ENCODE measurements at regions of chr1 and their contacts with region 1.

Region 1: DNA sequence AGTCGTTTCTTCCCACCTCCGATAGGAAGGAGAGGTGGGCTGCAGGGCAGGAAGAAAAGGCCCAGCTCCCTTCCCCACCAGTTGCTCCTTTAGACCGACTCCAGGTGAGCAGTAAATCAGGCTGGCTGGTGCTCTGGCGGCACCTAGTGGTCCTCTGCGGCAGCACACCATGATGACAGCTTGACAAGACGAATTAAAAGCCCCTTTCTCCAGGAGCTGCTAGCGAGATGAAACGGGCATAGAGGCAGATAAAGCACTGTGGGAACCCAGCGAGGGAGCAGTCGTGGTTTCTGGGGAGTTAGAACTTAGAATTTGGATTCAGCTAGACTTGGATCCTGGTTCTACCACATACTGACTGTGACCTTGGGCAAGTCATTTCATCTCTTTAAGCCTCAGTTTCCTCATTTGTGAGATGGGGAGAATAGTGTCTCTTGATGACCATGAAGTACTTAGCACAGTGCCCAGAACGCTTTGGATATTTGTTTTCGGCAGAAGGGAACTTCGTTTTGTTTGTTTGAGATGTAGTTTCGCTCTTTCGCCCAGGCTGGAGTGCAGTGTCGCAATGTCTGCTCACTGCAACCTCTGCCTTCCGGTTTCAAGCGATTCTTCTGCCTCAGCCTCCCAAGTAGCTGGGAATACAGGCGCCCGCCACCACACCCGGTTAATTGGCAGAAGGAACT is 21.8 kb upstream of the COL9A2 start:
- DNase-seq: peak; percentile 87
- ATAC-seq: peak; percentile 93
- H3K4me3 Mint-ChIP-seq: peak overlapping the region; percentile 36
- H3K27ac Mint-ChIP-seq: peak overlapping the region; percentile 64
- H3K4me1 Mint-ChIP-seq: peaks cover 40% of the 10 kb centered on the region
- H3K27me3 Mint-ChIP-seq: no peaks in the 10 kb centered on the region
- CTCF ChIP-seq: peak; percentile 96

Region 2: GRCh38 chr1:39919545-39919944 is 419.3 kb before region 1 on chr1:
- CTCF ChIA-PET with region 1: interaction called, 6 read pairs
- POLR2A ChIA-PET with region 1: no interaction called
- intact Hi-C with region 1: loop called (anchors 2 kb)
- DNase-seq: peak; percentile 22
- ATAC-seq: peak; percentile 99
- H3K4me3 Mint-ChIP-seq: no peak overlapping the region
- H3K27ac Mint-ChIP-seq: no peak overlapping the region
- H3K4me1 Mint-ChIP-seq: peaks cover 2% of the 10 kb centered on the region
- H3K27me3 Mint-ChIP-seq: no peaks in the 10 kb centered on the region
- CTCF ChIP-seq: no peak

Region 3: DNA sequence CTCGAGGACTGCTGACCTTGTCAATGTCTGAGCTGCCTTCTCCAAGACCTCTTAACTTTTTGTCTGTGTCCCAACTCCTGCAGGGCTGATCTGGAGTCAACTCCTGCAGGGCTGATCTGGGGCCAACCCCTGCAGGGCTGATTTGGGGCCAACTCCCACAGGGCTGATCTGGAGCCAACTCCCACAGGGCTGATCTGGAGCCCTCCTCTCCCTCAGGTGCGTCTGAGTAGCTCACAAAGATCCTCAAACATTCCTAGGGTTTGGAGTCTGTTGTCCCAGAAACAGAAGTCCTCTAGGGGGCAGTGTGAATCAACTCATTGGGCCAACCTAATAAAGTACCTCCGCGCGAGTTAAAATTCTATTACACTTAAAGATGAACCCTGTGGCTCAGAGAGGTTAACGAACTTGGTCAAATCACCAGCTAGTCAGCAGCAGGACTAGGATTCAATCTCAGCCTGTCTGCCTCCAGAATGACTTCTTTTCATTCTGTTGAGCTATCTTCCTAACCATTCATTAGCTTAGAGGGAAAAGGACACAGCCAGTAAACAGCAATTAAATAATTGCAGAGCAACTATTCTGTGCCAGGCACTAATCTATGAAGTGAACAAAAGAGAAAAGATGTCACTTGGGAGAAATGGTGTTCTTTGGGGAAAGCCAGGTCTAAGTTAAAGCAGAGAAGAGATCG is 194.9 kb before region 1 on chr1:
- CTCF ChIA-PET with region 1: interaction called, 175 read pairs
- POLR2A ChIA-PET with region 1: interaction called, 11 read pairs
- intact Hi-C with region 1: loop called (anchors 1 kb)
- DNase-seq: peak; percentile 22
- ATAC-seq: peak; percentile 83
- H3K4me3 Mint-ChIP-seq: no peak overlapping the region
- H3K27ac Mint-ChIP-seq: no peak overlapping the region
- H3K4me1 Mint-ChIP-seq: peaks cover 6% of the 10 kb centered on the region
- H3K27me3 Mint-ChIP-seq: peaks cover 9% of the 10 kb centered on the region
- CTCF ChIP-seq: no peak

Region 4: GRCh38 chr1:40257688-40258444 is 81.0 kb before region 1 on chr1 and contains the start of gene ZMPSTE24:
- CTCF ChIA-PET with region 1: interaction called, 4 read pairs
- POLR2A ChIA-PET with region 1: interaction called, 10 read pairs
- intact Hi-C with region 1: no loop called
- DNase-seq: peak; percentile 89
- ATAC-seq: peak; percentile 95
- H3K4me3 Mint-ChIP-seq: peak within 1 kb of the TSS; percentile 96
- H3K27ac Mint-ChIP-seq: peak within 1 kb of the TSS; percentile 99
- H3K4me1 Mint-ChIP-seq: peaks cover 38% of the 10 kb centered on the region
- H3K27me3 Mint-ChIP-seq: no peaks in the 10 kb centered on the region
- CTCF ChIP-seq: no peak
- total RNA-seq, gene ZMPSTE24: 17.6 and 18.6 TPM in 2 replicates

Region 5: GRCh38 chr1:40363721-40364120 is 24.8 kb after region 1 on chr1:
- CTCF ChIA-PET with region 1: interaction called, 45 read pairs
- POLR2A ChIA-PET with region 1: interaction called, 14 read pairs
- intact Hi-C with region 1: no loop called
- DNase-seq: peak; percentile 45
- ATAC-seq: peak; percentile 100
- H3K4me3 Mint-ChIP-seq: peak overlapping the region; percentile 5
- H3K27ac Mint-ChIP-seq: peak overlapping the region; percentile 74
- H3K4me1 Mint-ChIP-seq: peaks cover 19% of the 10 kb centered on the region
- H3K27me3 Mint-ChIP-seq: no peaks in the 10 kb centered on the region
- CTCF ChIP-seq: no peak

Region 6: GRCh38 chr1:40392221-40392620 is 53.3 kb after region 1 on chr1:
- CTCF ChIA-PET with region 1: interaction called, 39 read pairs
- POLR2A ChIA-PET with region 1: interaction called, 75 read pairs
- intact Hi-C with region 1: no loop called
- DNase-seq: no peak
- ATAC-seq: no peak
- H3K4me3 Mint-ChIP-seq: peak overlapping the region; percentile 74
- H3K27ac Mint-ChIP-seq: peak overlapping the region; percentile 90
- H3K4me1 Mint-ChIP-seq: peaks cover 97% of the 10 kb centered on the region
- H3K27me3 Mint-ChIP-seq: no peaks in the 10 kb centered on the region
- CTCF ChIP-seq: no peak

Region 7: GRCh38 chr1:40438391-40439015 is 99.6 kb after region 1 on chr1:
- CTCF ChIA-PET with region 1: interaction called, 18 read pairs
- POLR2A ChIA-PET with region 1: no interaction called
- intact Hi-C with region 1: no loop called
- DNase-seq: no peak
- ATAC-seq: peak; percentile 49
- H3K4me3 Mint-ChIP-seq: no peak overlapping the region
- H3K27ac Mint-ChIP-seq: no peak overlapping the region
- H3K4me1 Mint-ChIP-seq: peaks cover 4% of the 10 kb centered on the region
- H3K27me3 Mint-ChIP-seq: no peaks in the 10 kb centered on the region
- CTCF ChIP-seq: no peak

Measured in activated B cell treated with CpG ODN at 0.5 μM for 24 hours (primary cell).